HEK293 (cell line): ENCODE measurements at regions of chr17 and their contacts with region 1.

Region 1: DNA sequence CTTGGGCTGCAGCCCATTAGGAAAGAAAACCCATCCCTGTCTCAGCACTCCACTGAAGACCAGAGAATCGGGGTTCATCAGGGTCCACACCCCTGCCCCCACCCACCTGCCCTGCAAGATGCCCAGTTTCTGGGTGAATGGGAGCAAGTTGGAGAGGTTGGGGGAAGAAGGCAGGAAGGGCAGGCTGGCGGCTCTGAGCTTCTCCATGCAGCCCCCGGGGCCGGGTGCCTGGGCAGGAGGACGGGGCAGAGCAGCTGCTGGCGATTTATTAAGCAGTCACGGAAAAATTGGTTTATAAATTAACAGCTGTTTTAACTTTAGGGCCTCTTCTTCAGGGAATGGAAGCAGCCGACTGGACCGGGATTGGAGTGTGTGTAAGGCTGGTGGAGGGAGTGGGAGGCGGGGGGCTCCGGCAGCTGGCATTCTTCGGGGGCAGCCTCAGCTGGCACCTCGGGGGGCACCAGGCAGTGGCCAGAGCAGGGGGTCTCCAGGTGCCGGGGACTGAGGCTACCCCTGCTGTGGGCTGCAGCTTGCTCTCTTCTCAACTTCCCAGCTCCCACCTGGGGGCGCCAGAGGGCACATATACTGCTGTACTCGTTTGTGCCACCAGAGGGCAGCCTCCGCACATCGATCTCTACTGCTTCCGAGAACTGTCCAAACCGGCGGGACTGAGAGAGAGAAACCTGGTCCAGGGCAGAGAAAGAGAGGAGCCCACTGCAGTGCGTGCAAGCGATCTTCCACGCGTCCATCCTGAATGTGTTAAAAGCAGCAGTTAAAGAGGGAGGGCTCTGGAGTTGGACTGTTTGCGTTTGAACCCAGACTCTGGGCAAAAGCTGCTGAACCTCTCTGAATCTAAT is 5.0 kb upstream of the PPP1R1B start:
- H3K4me3 ChIP-seq: no peak overlapping the region
- H3K27ac ChIP-seq: no peak overlapping the region
- H3K4me1 ChIP-seq: peaks cover 4% of the 10 kb centered on the region
- CTCF ChIP-seq: peak; percentile 99

Region 2: GRCh38 chr17:38557836-38558727 is 1063.7 kb before region 1 on chr17:
- CTCF ChIA-PET with region 1: no interaction called
- POLR2A ChIA-PET with region 1: no interaction called
- H3K4me3 ChIP-seq: peak overlapping the region; percentile 37
- H3K27ac ChIP-seq: no peak overlapping the region
- H3K4me1 ChIP-seq: peaks cover 15% of the 10 kb centered on the region
- CTCF ChIP-seq: peak; percentile 99

Region 3: GRCh38 chr17:39527220-39527813 is 94.4 kb before region 1 on chr17:
- CTCF ChIA-PET with region 1: interaction called, 19 read pairs
- POLR2A ChIA-PET with region 1: no interaction called
- H3K4me3 ChIP-seq: no peak overlapping the region
- H3K27ac ChIP-seq: no peak overlapping the region
- H3K4me1 ChIP-seq: no peaks in the 10 kb centered on the region
- CTCF ChIP-seq: peak; percentile 66; the same call in 1 of the 2 replicates

Region 4: DNA sequence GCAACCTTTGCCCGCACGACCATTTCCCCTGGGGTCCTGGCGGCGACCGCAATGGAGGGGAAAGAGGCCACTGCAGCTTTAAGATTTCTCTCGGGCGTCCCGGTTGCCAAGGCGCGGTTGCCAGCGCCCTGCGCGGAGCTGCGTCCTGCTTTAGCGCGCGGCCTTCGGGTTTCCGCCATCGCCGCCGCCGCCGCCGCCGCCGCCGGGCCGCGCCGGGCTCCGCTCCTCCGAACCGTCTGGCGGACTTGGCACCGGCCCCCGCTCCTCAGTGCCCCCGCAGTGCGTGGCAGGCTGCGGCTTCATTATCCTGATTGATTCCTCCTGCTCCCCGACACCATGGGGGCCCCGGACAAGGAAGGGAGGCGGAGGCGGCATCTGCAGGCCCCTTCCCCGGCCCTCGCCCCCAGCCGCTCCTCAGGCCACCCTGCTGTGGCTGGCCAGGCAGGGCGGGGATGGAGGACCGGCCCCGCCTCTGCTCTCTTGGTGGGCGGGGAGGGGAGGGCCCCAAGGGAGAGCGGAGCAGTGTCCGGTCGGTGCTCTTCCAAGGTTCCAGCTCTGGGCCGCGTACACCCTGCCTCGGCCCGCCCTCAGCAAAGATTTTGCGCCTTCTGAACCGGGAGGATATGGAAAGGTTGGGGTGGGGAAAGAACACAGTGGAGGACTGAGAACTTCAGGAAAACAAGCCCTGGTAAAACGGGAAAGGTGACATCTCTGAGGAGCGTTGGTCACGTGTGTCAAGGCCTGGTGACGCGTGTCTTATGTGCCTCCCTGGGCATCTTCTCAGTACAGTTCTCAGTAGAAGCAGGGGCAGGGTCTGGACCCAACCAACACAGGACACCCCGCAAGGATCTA is 48.1 kb before region 1 on chr17:
- CTCF ChIA-PET with region 1: interaction called, 26 read pairs
- POLR2A ChIA-PET with region 1: interaction called, 3 read pairs
- H3K4me3 ChIP-seq: peak overlapping the region; percentile 64
- H3K27ac ChIP-seq: peak overlapping the region; percentile 79
- H3K4me1 ChIP-seq: 0 out of 2 replicates have a peak, but pooled peaks cover 3% of the 10 kb centered on the region
- CTCF ChIP-seq: no peak

Region 5: GRCh38 chr17:39636927-39637736 is 15.4 kb after region 1 on chr17 and contains the start of gene STARD3:
- CTCF ChIA-PET with region 1: interaction called, 311 read pairs
- POLR2A ChIA-PET with region 1: interaction called, 12 read pairs
- H3K4me3 ChIP-seq: peak within 1 kb of the TSS; percentile 88
- H3K27ac ChIP-seq: peak within 1 kb of the TSS; percentile 76
- H3K4me1 ChIP-seq: peaks cover 25% of the 10 kb centered on the region
- CTCF ChIP-seq: peak; percentile 90

Region 6: DNA sequence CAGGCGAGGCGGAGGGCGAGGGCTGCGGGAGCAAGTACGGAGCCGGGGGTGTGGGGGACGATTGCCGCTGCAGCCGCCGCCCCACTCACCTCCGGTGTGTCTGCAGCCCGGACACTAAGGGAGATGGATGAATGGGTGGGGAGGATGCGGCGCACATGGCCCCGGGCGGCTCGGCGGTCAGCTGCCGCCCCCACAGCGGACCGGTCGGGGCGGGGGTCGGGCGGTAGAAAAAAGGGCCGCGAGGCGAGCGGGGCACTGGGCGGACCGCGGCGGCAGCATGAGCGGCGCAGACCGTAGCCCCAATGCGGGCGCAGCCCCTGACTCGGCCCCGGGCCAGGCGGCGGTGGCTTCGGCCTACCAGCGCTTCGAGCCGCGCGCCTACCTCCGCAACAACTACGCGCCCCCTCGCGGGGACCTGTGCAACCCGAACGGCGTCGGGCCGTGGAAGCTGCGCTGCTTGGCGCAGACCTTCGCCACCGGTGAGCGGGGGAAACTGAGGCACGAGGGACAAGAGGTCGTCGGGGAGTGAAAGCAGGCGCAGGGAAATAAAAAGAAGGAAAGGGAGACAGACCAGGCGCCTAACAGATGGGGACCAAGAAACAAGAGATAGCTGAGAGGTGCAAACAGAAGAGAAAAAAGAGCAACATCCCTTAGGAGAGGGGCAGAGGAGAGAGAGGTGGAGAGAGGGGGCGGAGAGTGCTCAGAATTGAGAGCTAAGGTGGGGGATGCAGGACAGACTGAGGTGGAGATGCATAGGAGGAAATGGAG is 46.6 kb after region 1 on chr17 and contains the start of gene PNMT:
- CTCF ChIA-PET with region 1: interaction called, 168 read pairs
- POLR2A ChIA-PET with region 1: interaction called, 8 read pairs
- H3K4me3 ChIP-seq: peak within 1 kb of the TSS; percentile 34
- H3K27ac ChIP-seq: peak within 1 kb of the TSS; percentile 69; the same call in 1 of the 2 replicates
- H3K4me1 ChIP-seq: peaks cover 6% of the 10 kb centered on the region
- CTCF ChIP-seq: peak; percentile 96

Region 7: DNA sequence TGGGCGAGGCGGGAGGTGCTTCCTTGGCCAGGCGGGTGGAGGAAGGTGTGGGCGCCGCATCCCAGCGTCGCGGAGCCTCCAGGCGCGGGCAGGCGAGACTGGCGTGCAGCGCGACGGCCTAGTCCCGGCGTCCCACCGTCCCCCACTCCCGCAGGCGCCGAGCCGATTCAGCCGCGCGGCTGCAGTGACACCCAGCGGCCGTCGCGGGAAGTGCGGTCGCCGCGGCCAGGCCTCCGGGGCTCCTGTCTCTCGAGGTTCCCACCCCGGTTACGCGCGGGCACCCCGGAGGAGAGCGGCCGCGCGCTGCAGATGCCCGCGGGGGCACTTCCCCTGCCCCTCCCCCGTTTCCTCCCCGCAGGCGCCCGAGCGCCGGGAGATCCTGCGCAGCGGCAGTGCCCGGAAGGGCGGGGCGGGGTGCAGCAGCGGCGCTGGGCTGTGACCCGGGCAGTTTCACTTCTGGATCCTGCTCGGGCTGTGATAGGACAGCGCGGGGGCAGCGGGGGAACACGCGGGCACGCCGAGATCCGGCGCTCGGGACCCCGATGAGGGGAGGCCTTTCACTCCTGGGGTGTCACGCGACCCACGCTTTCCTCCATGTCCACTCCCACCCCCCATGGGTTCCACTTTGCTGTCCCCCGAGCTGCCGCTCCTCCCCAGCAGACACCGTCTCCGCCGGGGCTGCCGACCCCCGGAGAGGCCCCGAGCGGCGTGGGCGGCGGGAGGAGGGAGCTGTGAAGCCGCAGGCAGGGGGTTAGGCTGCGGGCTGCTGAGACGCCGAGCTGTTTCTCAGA is 132.6 kb after region 1 on chr17:
- CTCF ChIA-PET with region 1: interaction called, 140 read pairs
- POLR2A ChIA-PET with region 1: interaction called, 3 read pairs
- H3K4me3 ChIP-seq: peak overlapping the region; percentile 50
- H3K27ac ChIP-seq: peak overlapping the region; percentile 87
- H3K4me1 ChIP-seq: peaks cover 4% of the 10 kb centered on the region; the same call in 1 of the 2 replicates
- CTCF ChIP-seq: peak; percentile 95